Pancreas (tissue), 10 donors: ENCODE measurements at regions of chr13 and their contacts with region 1.

Region 1: GRCh38 chr13:27379694-27380641 is 44.5 kb upstream of the GTF3A start:
- DNase-seq: peak; percentile 74 to 86 (median 83)
- ATAC-seq: peak; percentile 65 to 92 (median 82)
- H3K4me3 ChIP-seq: no peak overlapping the region
- H3K27ac ChIP-seq: no peak overlapping the region
- H3K4me1 ChIP-seq: peaks cover 3 to 9% (median 8%) of the 10 kb centered on the region in 3 donors
- H3K27me3 ChIP-seq: no peaks in the 10 kb centered on the region
- CTCF ChIP-seq: peak; percentile 31 to 66 (median 62)

Region 2: GRCh38 chr13:27826379-27827353 is 446.7 kb after region 1 on chr13:
- intact Hi-C with region 1: loop called in 1 of 3 experiments (anchors 5 kb)
- DNase-seq: peak; percentile 75 to 93 (median 84)
- ATAC-seq: peak; percentile 89 to 96 (median 94)
- H3K4me3 ChIP-seq: peak overlapping the region in 2 of 4 donors; percentile 16 to 36
- H3K27ac ChIP-seq: peak overlapping the region in 1 of 4 donors; percentile 13
- H3K4me1 ChIP-seq: peaks cover 0 to 4% (median 4%) of the 10 kb centered on the region in 3 donors
- H3K27me3 ChIP-seq: peaks cover 0 to 13% (median 8%) of the 10 kb centered on the region in 4 donors
- CTCF ChIP-seq: peak; percentile 84 to 96 (median 89)